ENCODE measurements at regions of chr15 and their contacts with region 1.

Region 1: DNA sequence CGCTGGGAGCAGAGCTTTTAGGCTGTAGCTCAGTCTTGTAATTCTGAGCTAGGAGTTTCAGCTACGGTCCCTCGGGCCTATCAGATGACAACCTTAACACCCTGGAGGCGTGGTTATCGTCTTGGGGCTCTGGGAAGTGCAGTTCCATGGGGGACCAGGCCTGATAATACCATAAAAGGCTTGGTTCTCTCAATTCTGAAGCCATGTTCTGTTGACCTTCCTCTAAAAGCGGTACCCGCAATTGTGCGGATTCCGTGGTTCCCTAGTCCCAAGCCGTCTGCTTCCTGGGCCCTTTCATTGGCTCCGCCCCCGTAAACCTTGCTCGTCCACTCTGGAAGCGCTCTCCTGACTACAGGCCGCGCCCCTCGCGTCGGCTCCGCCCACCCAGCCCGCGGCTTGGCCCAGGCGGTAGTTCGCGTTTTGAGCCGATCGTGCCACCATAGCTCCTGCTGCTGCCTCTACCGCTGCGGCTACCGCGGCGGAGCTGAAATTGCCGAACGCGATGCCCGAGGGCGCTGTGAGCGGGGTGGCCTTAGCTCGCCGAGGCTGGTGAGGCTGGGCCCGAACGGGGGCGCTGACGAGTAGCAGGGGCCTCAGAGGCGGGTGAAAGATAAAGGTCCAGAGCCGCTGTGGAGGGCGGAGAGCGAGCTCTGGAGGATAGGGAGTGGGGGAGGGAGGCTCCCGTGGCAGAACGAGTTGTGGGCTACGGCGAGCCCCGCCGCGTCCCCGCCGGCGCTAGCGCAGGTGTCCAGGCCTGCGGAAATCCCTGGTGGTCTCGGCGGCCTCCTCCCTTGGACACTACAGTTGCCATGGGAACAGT is at the start of gene MAPKBP1:
- DNase-seq: peak; percentile 94 to 98 (median 96)
- H3K4me3 ChIP-seq: peak within 1 kb of the TSS; percentile 58 to 95 (median 86)
- H3K27ac ChIP-seq: peak within 1 kb of the TSS; percentile 70 to 97 (median 91)
- H3K27me3 ChIP-seq: no peaks in the 10 kb centered on the region
- CTCF ChIP-seq: peak; percentile 57 to 92 (median 76)
- total RNA-seq, gene MAPKBP1: 50.5 to 136 (median 77.6) TPM

Region 2: DNA sequence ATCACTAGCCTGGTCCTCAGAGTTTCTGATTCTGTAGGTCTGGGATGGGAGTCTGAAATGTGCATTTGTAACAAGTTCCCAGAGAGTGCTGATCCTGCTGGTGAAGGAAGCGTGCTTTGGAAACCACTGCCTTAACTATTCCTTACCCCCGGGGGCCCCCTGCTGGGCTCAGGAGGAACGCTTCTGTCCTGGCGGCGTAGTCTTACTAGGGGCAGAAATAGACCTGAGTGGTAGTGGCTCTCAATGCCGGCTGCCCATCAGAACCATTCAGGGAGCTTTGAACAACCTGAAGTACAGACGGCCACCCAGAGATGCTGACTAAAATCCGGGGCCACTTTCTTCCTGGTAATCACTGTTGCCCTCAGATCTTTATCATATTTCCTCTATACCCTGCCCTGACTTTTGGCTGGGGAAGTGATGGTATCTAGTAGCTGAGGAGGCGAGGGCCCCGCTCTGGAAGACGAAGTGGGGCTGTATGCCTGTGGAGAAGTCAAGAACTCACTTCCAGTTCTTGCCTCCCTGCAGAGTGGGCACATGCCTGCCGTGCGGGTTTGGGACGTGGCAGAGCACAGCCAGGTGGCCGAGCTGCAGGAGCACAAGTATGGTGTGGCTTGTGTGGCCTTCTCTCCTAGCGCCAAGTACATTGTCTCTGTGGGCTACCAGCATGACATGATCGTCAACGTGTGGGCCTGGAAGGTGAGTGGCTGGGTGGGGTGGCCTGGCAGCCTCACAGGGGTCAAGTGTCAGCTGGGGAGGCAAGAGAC is 37.3 kb after region 1 on chr15:
- intact Hi-C with region 1: loop called (anchors 1 kb)
- DNase-seq: peak; percentile 78 to 93 (median 88)
- H3K4me3 ChIP-seq: no peak overlapping the region
- H3K27ac ChIP-seq: peak overlapping the region in 22 of 59 donors; percentile 1 to 83 (median 40)
- H3K27me3 ChIP-seq: no peaks in the 10 kb centered on the region
- CTCF ChIP-seq: peak; percentile 60 to 97 (median 90)

Region 3: DNA sequence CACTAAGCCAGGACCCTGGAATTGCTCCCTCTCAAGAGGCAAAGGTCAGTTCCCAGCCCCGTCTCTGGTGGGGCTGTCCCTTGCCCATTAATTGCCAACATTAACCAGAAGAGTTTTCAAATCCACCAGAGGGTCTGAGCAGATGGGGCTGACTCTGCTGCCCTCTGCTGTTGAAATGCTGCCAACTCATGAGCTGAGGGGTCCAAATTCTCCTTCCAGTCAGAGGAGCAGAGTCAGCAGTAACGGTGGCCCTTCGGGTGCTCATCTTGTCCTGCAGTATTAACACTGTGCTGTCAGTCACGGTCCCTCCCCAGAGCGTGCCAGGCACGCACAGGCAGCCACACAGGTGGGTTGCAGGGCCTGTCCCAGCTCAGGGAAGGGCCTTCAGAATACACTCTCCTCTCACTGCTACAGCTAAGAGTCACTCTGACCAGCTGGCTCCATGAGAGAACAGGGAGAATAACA is 130.3 kb after region 1 on chr15:
- intact Hi-C with region 1: loop called in 1 of 2 experiments (anchors 2 kb)
- DNase-seq: peak in 8 of 10 donors; percentile 47 to 86 (median 70)
- H3K4me3 ChIP-seq: no peak overlapping the region
- H3K27ac ChIP-seq: peak overlapping the region in 9 of 59 donors; percentile 6 to 66 (median 14)
- H3K27me3 ChIP-seq: no peaks in the 10 kb centered on the region
- CTCF ChIP-seq: peak; percentile 44 to 90 (median 82)